ENCODE measurements at regions of chr19 and their contacts with region 1.

Region 1: DNA sequence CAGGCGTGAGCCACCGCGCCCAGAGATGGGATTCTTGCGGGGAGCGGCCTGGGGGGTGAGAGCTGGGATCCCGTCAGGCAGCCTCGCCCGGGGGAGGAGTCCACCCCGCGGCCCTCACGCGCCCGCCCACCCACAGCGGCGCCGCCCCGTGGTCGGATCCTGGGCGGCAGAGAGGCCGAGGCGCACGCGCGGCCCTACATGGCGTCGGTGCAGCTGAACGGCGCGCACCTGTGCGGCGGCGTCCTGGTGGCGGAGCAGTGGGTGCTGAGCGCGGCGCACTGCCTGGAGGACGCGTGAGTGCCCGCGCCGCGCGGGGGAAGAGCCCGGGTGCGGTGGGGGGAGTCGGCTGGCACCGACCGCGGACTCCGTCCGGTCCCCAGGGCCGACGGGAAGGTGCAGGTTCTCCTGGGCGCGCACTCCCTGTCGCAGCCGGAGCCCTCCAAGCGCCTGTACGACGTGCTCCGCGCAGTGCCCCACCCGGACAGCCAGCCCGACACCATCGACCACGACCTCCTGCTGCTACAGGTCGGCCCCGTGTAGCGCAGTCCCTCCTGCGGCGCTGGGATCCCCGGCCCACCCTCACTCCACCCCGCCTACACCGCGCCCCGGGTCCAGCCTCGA is 1.1 kb downstream of the CFD start:
- H3K4me3 Mint-ChIP-seq: peak overlapping the region; percentile 76
- H3K27ac Mint-ChIP-seq: peak overlapping the region; percentile 89
- H3K4me1 Mint-ChIP-seq: peaks cover 57% of the 10 kb centered on the region
- H3K27me3 Mint-ChIP-seq: peaks cover 2% of the 10 kb centered on the region

Region 2: GRCh38 chr19:835210-835810 is 25.3 kb before region 1 on chr19:
- intact Hi-C with region 1: no loop called
- H3K4me3 Mint-ChIP-seq: no peak overlapping the region
- H3K27ac Mint-ChIP-seq: no peak overlapping the region
- H3K4me1 Mint-ChIP-seq: peaks cover 40% of the 10 kb centered on the region
- H3K27me3 Mint-ChIP-seq: peaks cover 54% of the 10 kb centered on the region

Region 3: DNA sequence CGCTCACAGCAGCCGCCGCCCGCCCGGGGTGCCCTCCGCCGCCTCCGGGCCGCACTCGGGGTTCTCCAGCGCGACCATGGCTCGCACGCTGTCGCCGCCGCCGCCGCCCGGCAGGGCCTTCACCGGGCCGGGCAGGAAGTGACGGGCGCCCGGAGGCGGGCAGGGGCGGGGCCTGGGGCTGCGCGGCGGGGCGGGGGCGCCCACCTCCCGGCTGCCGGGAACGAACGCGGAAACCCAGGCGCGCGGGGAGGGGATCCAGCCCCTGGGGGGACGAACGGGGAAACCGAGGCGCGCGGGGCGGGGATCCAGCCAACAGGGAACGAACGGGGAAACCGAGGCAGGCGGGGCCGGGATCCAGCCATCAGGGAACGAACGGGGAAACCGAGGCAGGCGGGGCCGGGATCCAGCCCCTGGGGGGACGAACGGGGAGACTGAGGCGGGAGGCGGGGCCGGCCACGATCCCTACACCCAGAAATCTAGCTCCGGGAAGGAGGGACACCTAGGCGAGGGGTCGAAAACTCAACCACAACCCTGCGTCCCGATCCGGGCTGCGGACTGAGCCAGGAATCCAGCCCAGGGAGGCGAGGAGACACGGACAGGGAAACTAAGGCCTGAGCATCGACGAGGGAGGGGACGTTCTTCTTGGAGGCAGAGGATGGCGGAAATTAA is 52.6 kb after region 1 on chr19 and contains the start of gene R3HDM4:
- intact Hi-C with region 1: loop called (anchors 2 kb)
- H3K4me3 Mint-ChIP-seq: peak within 1 kb of the TSS; percentile 89
- H3K27ac Mint-ChIP-seq: peak within 1 kb of the TSS; percentile 85
- H3K4me1 Mint-ChIP-seq: peaks cover 38% of the 10 kb centered on the region
- H3K27me3 Mint-ChIP-seq: peaks cover 22% of the 10 kb centered on the region

Region 4: DNA sequence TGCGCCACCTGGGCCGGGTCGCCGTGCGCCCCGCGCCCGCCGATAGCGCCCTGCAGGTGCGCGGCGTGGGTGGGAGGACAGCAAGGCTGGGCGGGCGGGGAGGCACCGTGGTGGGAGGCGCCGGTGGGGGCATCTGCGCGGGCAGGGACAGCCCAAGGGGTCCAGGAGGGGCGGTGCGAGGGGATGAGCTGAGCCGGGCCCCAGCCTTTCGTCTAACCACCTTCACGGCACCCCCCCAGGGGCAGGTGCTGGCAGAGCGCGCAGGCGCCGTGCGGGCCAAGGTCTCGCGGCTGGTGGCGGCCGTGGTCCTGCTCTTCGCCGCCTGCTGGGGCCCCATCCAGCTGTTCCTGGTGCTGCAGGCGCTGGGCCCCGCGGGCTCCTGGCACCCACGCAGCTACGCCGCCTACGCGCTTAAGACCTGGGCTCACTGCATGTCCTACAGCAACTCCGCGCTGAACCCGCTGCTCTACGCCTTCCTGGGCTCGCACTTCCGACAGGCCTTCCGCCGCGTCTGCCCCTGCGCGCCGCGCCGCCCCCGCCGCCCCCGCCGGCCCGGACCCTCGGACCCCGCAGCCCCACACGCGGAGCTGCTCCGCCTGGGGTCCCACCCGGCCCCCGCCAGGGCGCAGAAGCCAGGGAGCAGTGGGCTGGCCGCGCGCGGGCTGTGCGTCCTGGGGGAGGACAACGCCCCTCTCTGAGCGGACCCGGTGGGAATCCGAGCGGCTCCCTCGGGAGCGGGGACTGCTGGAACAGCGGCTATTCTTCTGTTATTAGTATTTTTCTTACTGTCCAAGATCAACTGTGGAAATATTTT is 59.7 kb after region 1 on chr19:
- intact Hi-C with region 1: loop called (anchors 2 kb)
- H3K4me3 Mint-ChIP-seq: peak overlapping the region; percentile 51
- H3K27ac Mint-ChIP-seq: no peak overlapping the region
- H3K4me1 Mint-ChIP-seq: peaks cover 44% of the 10 kb centered on the region
- H3K27me3 Mint-ChIP-seq: peaks cover 57% of the 10 kb centered on the region

Region 5: DNA sequence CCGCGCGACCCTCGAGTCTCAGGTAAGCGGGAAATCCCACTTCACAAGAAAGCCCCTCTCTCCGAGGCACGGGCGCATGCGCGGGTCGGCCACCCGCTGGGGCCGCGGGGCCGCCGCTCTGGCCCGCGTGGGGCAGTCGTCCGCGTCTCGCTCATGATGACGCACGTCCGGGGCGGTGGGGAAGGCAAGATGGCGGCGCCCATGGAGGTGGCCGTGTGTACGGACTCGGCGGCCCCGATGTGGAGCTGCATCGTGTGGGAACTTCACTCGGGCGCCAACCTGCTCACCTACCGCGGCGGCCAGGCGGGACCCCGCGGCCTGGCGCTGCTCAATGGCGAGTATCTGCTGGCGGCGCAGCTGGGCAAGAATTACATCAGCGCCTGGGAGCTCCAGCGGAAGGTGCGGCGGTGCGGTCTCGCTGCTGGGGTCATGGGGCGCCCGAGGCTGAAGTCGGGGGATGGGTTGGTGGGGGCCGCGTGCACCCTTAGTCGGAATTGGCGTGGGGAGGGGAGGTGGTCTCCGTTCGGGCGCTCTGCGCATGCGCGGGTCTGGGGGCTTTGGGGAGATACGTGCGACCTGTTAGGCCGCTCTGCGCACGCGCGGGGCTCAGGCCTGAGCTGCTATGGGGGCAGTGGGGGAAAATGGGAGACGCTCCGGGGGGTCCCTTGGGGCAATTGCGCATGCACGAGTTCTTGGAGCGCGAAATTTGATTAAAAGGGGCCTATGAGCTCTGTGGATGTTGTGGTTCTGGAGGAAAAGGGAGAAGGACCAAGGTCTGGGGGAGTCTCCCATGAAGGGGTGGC is 123.8 kb after region 1 on chr19 and contains the start of gene WDR18:
- intact Hi-C with region 1: loop called (anchors 5 kb)
- H3K4me3 Mint-ChIP-seq: peak within 1 kb of the TSS; percentile 92
- H3K27ac Mint-ChIP-seq: peak within 1 kb of the TSS; percentile 95
- H3K4me1 Mint-ChIP-seq: peaks cover 52% of the 10 kb centered on the region
- H3K27me3 Mint-ChIP-seq: no peaks in the 10 kb centered on the region

Measured in dendritic cell treated with granulocyte-macrophage colony-stimulating factor and Interleukin-4, amounts not matched to agents 40 ng/mL and 50 ng/mL, for 4 days (primary cell).